Activated CD4-positive, alpha-beta memory T cell treated with anti-CD3 and anti-CD28 coated beads, Interleukin-2, amount 10 ng/mL, durations not matched to agents 7 days and 5 days (primary cell): ENCODE measurements at regions of chr1 and their contacts with region 1.

Region 1: GRCh38 chr1:84573967-84574842 is at the start of gene CTBS:
- DNase-seq: peak; percentile 86
- H3K4me3 Mint-ChIP-seq: peak within 1 kb of the TSS; percentile 97
- H3K27ac Mint-ChIP-seq: peak within 1 kb of the TSS; percentile 100
- H3K4me1 Mint-ChIP-seq: peaks cover 39% of the 10 kb centered on the region
- H3K27me3 Mint-ChIP-seq: no peaks in the 10 kb centered on the region
- total RNA-seq, gene CTBS: 27.2 to 28.1 TPM

Region 2: GRCh38 chr1:84143796-84144565 is 430.2 kb before region 1 on chr1 and contains the start of gene PRKACB:
- CTCF ChIA-PET with region 1: interaction called, 6 read pairs
- POLR2A ChIA-PET with region 1: interaction called, 96 read pairs
- DNase-seq: no peak
- H3K4me3 Mint-ChIP-seq: peak within 1 kb of the TSS; percentile 90
- H3K27ac Mint-ChIP-seq: peak within 1 kb of the TSS; percentile 95
- H3K4me1 Mint-ChIP-seq: peaks cover 30% of the 10 kb centered on the region
- H3K27me3 Mint-ChIP-seq: no peaks in the 10 kb centered on the region
- total RNA-seq, gene PRKACB: 74.7 to 77.4 TPM

Region 3: GRCh38 chr1:84442256-84442655 is 131.9 kb before region 1 on chr1:
- CTCF ChIA-PET with region 1: interaction called, 13 read pairs
- POLR2A ChIA-PET with region 1: interaction called, 37 read pairs
- DNase-seq: no peak
- H3K4me3 Mint-ChIP-seq: peak overlapping the region; percentile 38
- H3K27ac Mint-ChIP-seq: peak overlapping the region; percentile 83
- H3K4me1 Mint-ChIP-seq: peaks cover 22% of the 10 kb centered on the region
- H3K27me3 Mint-ChIP-seq: peaks cover 10% of the 10 kb centered on the region

Region 4: DNA sequence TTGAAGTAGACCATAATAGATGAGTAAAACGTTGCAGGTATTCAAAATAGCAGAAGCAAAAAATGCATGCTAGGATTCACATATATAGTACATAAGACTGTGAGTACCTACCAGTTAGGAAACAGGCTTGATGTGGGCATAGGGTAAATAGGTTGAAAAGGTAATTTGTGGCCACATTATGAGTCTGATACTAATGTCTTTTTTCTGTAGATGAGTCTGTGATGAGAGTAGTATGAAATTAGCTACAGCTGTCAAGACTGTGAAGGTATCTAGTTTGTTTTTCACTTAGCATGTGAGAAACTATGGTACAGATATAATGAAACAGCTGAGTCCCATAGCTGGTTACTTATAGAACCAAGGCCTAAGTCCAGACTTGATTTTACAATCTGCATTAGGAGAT is 80.5 kb before region 1 on chr1:
- CTCF ChIA-PET with region 1: no interaction called
- POLR2A ChIA-PET with region 1: interaction called, 13 read pairs
- DNase-seq: no peak
- H3K4me3 Mint-ChIP-seq: no peak overlapping the region
- H3K27ac Mint-ChIP-seq: no peak overlapping the region
- H3K4me1 Mint-ChIP-seq: peaks cover 14% of the 10 kb centered on the region
- H3K27me3 Mint-ChIP-seq: no peaks in the 10 kb centered on the region

Region 5: GRCh38 chr1:84598846-84599741 is 24.9 kb after region 1 on chr1:
- CTCF ChIA-PET with region 1: interaction called, 4 read pairs
- POLR2A ChIA-PET with region 1: interaction called, 18 read pairs
- DNase-seq: no peak
- H3K4me3 Mint-ChIP-seq: no peak overlapping the region
- H3K27ac Mint-ChIP-seq: peak overlapping the region; percentile 14
- H3K4me1 Mint-ChIP-seq: peaks cover 24% of the 10 kb centered on the region
- H3K27me3 Mint-ChIP-seq: peaks cover 3% of the 10 kb centered on the region

Region 6: GRCh38 chr1:84611796-84612195 is 37.6 kb after region 1 on chr1:
- CTCF ChIA-PET with region 1: no interaction called
- POLR2A ChIA-PET with region 1: no interaction called
- DNase-seq: no peak
- H3K4me3 Mint-ChIP-seq: no peak overlapping the region
- H3K27ac Mint-ChIP-seq: no peak overlapping the region
- H3K4me1 Mint-ChIP-seq: no peaks in the 10 kb centered on the region
- H3K27me3 Mint-ChIP-seq: no peaks in the 10 kb centered on the region

Region 7: GRCh38 chr1:84690397-84691121 is 116.4 kb after region 1 on chr1 and contains the start of gene SSX2IP:
- CTCF ChIA-PET with region 1: no interaction called
- POLR2A ChIA-PET with region 1: interaction called, 53 read pairs
- DNase-seq: peak; percentile 99
- H3K4me3 Mint-ChIP-seq: peak within 1 kb of the TSS; percentile 87
- H3K27ac Mint-ChIP-seq: peak within 1 kb of the TSS; percentile 82
- H3K4me1 Mint-ChIP-seq: peaks cover 58% of the 10 kb centered on the region
- H3K27me3 Mint-ChIP-seq: no peaks in the 10 kb centered on the region
- total RNA-seq, gene SSX2IP: 16.8 to 18.8 TPM

Region 8: DNA sequence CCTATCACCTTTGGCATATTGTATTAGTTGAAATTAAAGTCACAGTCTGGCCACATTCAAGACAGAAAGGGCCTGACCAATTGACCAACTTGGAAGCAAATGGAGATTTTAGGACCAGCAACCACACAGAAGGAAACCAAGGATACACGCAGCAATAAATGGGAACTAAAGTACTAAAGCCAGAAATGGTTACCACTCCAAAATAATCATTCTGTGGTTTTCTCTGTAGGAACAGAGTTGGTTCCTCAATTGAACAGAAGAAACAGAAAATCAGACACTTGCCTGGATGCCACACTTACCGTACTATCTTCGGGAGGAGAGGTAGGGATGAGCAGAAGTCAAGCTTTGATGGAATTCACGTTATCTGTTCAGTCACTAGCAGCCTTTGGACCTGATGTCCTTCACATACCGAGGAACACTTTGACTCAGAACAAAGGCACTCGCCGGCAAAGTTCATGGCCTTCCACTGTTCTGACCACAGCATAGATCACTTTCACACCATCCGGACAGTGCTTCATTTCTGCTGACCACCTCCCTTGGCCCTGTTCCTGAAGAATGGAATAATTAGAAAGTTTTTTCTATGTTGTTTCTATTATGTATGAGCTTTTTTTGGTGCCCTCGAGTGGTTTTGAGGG is 221.9 kb after region 1 on chr1:
- CTCF ChIA-PET with region 1: no interaction called
- POLR2A ChIA-PET with region 1: no interaction called
- DNase-seq: no peak
- H3K4me3 Mint-ChIP-seq: no peak overlapping the region
- H3K27ac Mint-ChIP-seq: no peak overlapping the region
- H3K4me1 Mint-ChIP-seq: no peaks in the 10 kb centered on the region
- H3K27me3 Mint-ChIP-seq: peaks cover 6% of the 10 kb centered on the region